ENCODE measurements at regions of chr1 and their contacts with region 1.

Region 1: GRCh38 chr1:96346708-96347107 is 374.9 kb upstream of the PTBP2 start:
- DNase-seq: peak; percentile 16
- ATAC-seq: peak; percentile 42; the same call in 1 of the 2 replicates
- H3K4me3 ChIP-seq: no peak overlapping the region
- H3K27ac ChIP-seq: no peak overlapping the region
- H3K4me1 ChIP-seq: no peaks in the 10 kb centered on the region
- H3K27me3 ChIP-seq: no peaks in the 10 kb centered on the region
- CTCF ChIP-seq: peak; percentile 34; the same call in 1 of the 2 replicates

Region 2: GRCh38 chr1:96541511-96541910 is 194.8 kb after region 1 on chr1:
- CTCF ChIA-PET with region 1: no interaction called
- POLR2A ChIA-PET with region 1: interaction called, 10 read pairs
- intact Hi-C with region 1: no loop called
- DNase-seq: no peak
- ATAC-seq: no peak
- H3K4me3 ChIP-seq: no peak overlapping the region
- H3K27ac ChIP-seq: no peak overlapping the region
- H3K4me1 ChIP-seq: no peaks in the 10 kb centered on the region
- H3K27me3 ChIP-seq: peaks cover 10% of the 10 kb centered on the region; the same call in 1 of the 2 replicates
- CTCF ChIP-seq: no peak